Psoas muscle (tissue), 8 donors: ENCODE measurements at regions of chr17 and their contacts with region 1.

Region 1: GRCh38 chr17:48543107-48543853 is 1.6 kb downstream of the HOXB2 start:
- DNase-seq: peak; percentile 62 to 73
- ATAC-seq: peak; percentile 59 to 67 (median 64)
- H3K4me3 ChIP-seq: peak overlapping the region; percentile 85
- H3K27ac ChIP-seq: peak overlapping the region; percentile 89
- H3K4me1 ChIP-seq: peaks cover 5% of the 10 kb centered on the region
- H3K27me3 ChIP-seq: peaks cover 4 to 9% (median 9%) of the 10 kb centered on the region in 3 donors
- CTCF ChIP-seq: peak; percentile 26

Region 2: GRCh38 chr17:48307814-48308411 is 235.4 kb before region 1 on chr17:
- intact Hi-C with region 1: no loop called
- DNase-seq: peak in 1 of 2 donors; percentile 28
- ATAC-seq: peak; percentile 54 to 77 (median 58)
- H3K4me3 ChIP-seq: no peak overlapping the region
- H3K27ac ChIP-seq: no peak overlapping the region
- H3K4me1 ChIP-seq: no peaks in the 10 kb centered on the region
- H3K27me3 ChIP-seq: peaks cover 0 to 33% (median 16%) of the 10 kb centered on the region in 3 donors
- CTCF ChIP-seq: peak; percentile 78

Region 3: GRCh38 chr17:48492401-48493298 is 50.6 kb before region 1 on chr17:
- intact Hi-C with region 1: loop called in 1 of 2 experiments (anchors 5 kb)
- DNase-seq: peak; percentile 76 to 90
- ATAC-seq: peak; percentile 95 to 100 (median 98)
- H3K4me3 ChIP-seq: peak overlapping the region; percentile 40
- H3K27ac ChIP-seq: no peak overlapping the region
- H3K4me1 ChIP-seq: peaks cover 6% of the 10 kb centered on the region
- H3K27me3 ChIP-seq: peaks cover 0 to 12% (median 2%) of the 10 kb centered on the region in 3 donors
- CTCF ChIP-seq: peak; percentile 89

Region 4: DNA sequence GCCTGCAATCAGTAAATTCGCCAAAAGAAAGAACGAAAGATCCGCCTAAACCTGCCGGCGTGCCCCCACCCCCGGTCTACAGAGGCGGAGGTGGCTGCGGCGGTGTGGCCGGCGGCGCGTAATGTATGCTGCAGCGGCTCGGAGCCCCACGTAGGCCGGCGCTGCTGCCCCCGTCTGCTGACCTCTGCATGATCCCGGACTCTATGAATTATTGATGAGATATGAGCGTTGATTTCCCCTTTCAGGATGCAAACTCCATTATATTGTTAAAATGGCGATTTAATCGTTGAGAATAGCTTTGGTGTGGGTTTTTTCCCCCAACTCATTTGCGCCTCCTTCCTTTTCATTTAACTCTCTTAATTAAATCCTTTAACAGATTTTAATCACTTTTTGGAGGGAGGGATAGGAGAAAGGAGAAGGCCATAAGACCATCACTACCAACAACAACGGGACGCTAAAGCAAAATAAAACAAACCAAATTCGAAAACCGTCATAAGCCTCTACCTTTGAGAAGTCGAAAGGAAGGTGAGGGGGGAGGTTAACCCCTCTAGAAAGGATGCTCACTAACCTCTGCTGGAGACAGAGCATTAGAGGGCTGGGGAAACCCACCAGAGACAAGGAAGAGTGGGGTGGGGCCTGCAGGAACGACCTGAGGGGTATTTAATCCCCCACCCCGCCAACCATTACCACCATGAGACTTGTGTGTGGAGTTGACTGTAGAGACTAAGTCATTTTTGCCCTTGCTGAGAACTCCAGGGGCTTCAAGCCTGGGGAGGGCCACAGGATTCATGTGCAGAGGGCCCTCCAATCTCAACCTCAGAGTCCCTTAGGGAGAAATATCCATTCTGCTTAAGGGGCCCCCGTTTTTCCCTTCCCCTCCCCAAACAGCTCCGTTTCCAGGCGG is 43.3 kb after region 1 on chr17:
- intact Hi-C with region 1: no loop called
- DNase-seq: no peak
- ATAC-seq: no peak
- H3K4me3 ChIP-seq: peak overlapping the region; percentile 78
- H3K27ac ChIP-seq: peak overlapping the region; percentile 61
- H3K4me1 ChIP-seq: peaks cover 9% of the 10 kb centered on the region
- H3K27me3 ChIP-seq: peaks cover 0 to 86% (median 40%) of the 10 kb centered on the region in 3 donors
- CTCF ChIP-seq: no peak

Region 5: GRCh38 chr17:48618256-48618897 is 75.1 kb after region 1 on chr17:
- intact Hi-C with region 1: no loop called
- DNase-seq: peak; percentile 84 to 93
- ATAC-seq: peak; percentile 87 to 97 (median 94)
- H3K4me3 ChIP-seq: peak overlapping the region; percentile 15
- H3K27ac ChIP-seq: no peak overlapping the region
- H3K4me1 ChIP-seq: peaks cover 4% of the 10 kb centered on the region
- H3K27me3 ChIP-seq: peaks cover 10 to 97% (median 53%) of the 10 kb centered on the region in 3 donors
- CTCF ChIP-seq: peak; percentile 99

Region 6: GRCh38 chr17:48711102-48711501 is 167.8 kb after region 1 on chr17:
- intact Hi-C with region 1: no loop called
- DNase-seq: no peak
- ATAC-seq: no peak
- H3K4me3 ChIP-seq: no peak overlapping the region
- H3K27ac ChIP-seq: no peak overlapping the region
- H3K4me1 ChIP-seq: no peaks in the 10 kb centered on the region
- H3K27me3 ChIP-seq: peaks cover 3 to 96% (median 19%) of the 10 kb centered on the region in 3 donors
- CTCF ChIP-seq: no peak